CD8-positive, alpha-beta T cell (primary cell): ENCODE measurements at regions of chr2 and their contacts with region 1.

Region 1: GRCh38 chr2:73985308-73986084 is 786 bp downstream of the TET3 start:
- DNase-seq: peak in 7 of 9 experiments; percentile 45 to 83 (median 61)
- ATAC-seq: peak; percentile 33
- H3K4me3 ChIP-seq: peak overlapping the region; percentile 65 to 72
- H3K4me3 Mint-ChIP-seq: peak overlapping the region; percentile 80
- H3K27ac ChIP-seq: peak overlapping the region; percentile 37 to 71
- H3K27ac Mint-ChIP-seq: peak overlapping the region; percentile 85
- H3K4me1 ChIP-seq: peaks cover 78% of the 10 kb centered on the region
- H3K4me1 Mint-ChIP-seq: peaks cover 79% of the 10 kb centered on the region
- H3K27me3 ChIP-seq: no peaks in the 10 kb centered on the region
- H3K27me3 Mint-ChIP-seq: no peaks in the 10 kb centered on the region
- CTCF ChIP-seq: no peak

Region 2: DNA sequence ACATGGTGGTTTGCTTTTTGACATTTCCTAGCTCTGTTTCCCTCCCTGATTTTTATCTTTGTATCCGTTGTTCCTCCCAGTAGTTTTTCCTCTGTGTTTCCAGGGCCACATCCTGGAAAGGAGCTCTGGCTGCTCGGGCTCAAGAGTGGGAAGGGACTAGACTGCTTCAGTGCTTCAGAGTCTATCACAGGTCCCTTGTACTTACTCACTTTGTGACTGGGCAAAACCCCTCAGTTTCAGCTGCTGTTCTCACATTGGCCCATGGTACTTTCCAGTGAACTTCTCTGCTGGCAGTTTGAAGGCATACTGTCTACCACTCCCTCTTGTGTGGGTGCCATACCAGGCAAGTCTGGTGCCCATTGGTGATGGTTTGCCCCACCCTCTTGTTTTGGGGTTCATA is 164.3 kb before region 1 on chr2:
- CTCF ChIA-PET with region 1: interaction called, 10 read pairs
- POLR2A ChIA-PET with region 1: interaction called, 4 read pairs
- intact Hi-C with region 1: loop called (anchors 2 kb)
- DNase-seq: no peak
- ATAC-seq: no peak
- H3K4me3 ChIP-seq: no peak overlapping the region
- H3K4me3 Mint-ChIP-seq: no peak overlapping the region
- H3K27ac ChIP-seq: no peak overlapping the region
- H3K27ac Mint-ChIP-seq: no peak overlapping the region
- H3K4me1 ChIP-seq: no peaks in the 10 kb centered on the region
- H3K4me1 Mint-ChIP-seq: peaks cover 7% of the 10 kb centered on the region
- H3K27me3 ChIP-seq: peaks cover 0 to 3% of the 10 kb centered on the region in 2 experiments
- H3K27me3 Mint-ChIP-seq: peaks cover 5% of the 10 kb centered on the region
- CTCF ChIP-seq: no peak

Region 3: GRCh38 chr2:73926493-73927338 is 58.8 kb before region 1 on chr2 and contains the start of gene DGUOK:
- CTCF ChIA-PET with region 1: interaction called, 3 read pairs
- POLR2A ChIA-PET with region 1: interaction called, 10 read pairs
- intact Hi-C with region 1: loop called (anchors 1 kb)
- DNase-seq: peak; percentile 90 to 100 (median 96)
- ATAC-seq: peak; percentile 96
- H3K4me3 ChIP-seq: peak within 1 kb of the TSS; percentile 70 to 72
- H3K4me3 Mint-ChIP-seq: peak within 1 kb of the TSS; percentile 88
- H3K27ac ChIP-seq: peak within 1 kb of the TSS; percentile 94
- H3K27ac Mint-ChIP-seq: peak within 1 kb of the TSS; percentile 99
- H3K4me1 ChIP-seq: peaks cover 45% of the 10 kb centered on the region
- H3K4me1 Mint-ChIP-seq: peaks cover 52% of the 10 kb centered on the region
- H3K27me3 ChIP-seq: no peaks in the 10 kb centered on the region
- H3K27me3 Mint-ChIP-seq: no peaks in the 10 kb centered on the region
- CTCF ChIP-seq: no peak
- total RNA-seq, gene DGUOK: 29.0 to 31.8 TPM

Region 4: GRCh38 chr2:73939419-73939818 is 46.1 kb before region 1 on chr2:
- CTCF ChIA-PET with region 1: interaction called, 10 read pairs
- POLR2A ChIA-PET with region 1: interaction called, 3 read pairs
- intact Hi-C with region 1: loop called in 1 of 2 experiments (anchors 1 kb)
- DNase-seq: peak in 4 of 9 experiments; percentile 34 to 64 (median 44)
- ATAC-seq: peak; percentile 80
- H3K4me3 ChIP-seq: no peak overlapping the region
- H3K4me3 Mint-ChIP-seq: no peak overlapping the region
- H3K27ac ChIP-seq: no peak overlapping the region
- H3K27ac Mint-ChIP-seq: peak overlapping the region; percentile 56
- H3K4me1 ChIP-seq: peaks cover 33% of the 10 kb centered on the region
- H3K4me1 Mint-ChIP-seq: peaks cover 73% of the 10 kb centered on the region
- H3K27me3 ChIP-seq: no peaks in the 10 kb centered on the region
- H3K27me3 Mint-ChIP-seq: no peaks in the 10 kb centered on the region
- CTCF ChIP-seq: peak; percentile 20

Region 5: GRCh38 chr2:73970850-73971471 is 14.5 kb before region 1 on chr2:
- CTCF ChIA-PET with region 1: interaction called, 16 read pairs
- POLR2A ChIA-PET with region 1: interaction called, 24 read pairs
- intact Hi-C with region 1: loop called in 1 of 2 experiments (anchors 2 kb)
- DNase-seq: peak in 8 of 9 experiments; percentile 39 to 91 (median 66)
- ATAC-seq: peak; percentile 82
- H3K4me3 ChIP-seq: peak overlapping the region; percentile 16 to 20
- H3K4me3 Mint-ChIP-seq: peak overlapping the region; percentile 73
- H3K27ac ChIP-seq: peak overlapping the region; percentile 42 to 83
- H3K27ac Mint-ChIP-seq: peak overlapping the region; percentile 84
- H3K4me1 ChIP-seq: peaks cover 50% of the 10 kb centered on the region
- H3K4me1 Mint-ChIP-seq: peaks cover 73% of the 10 kb centered on the region
- H3K27me3 ChIP-seq: no peaks in the 10 kb centered on the region
- H3K27me3 Mint-ChIP-seq: no peaks in the 10 kb centered on the region
- CTCF ChIP-seq: no peak

Region 6: DNA sequence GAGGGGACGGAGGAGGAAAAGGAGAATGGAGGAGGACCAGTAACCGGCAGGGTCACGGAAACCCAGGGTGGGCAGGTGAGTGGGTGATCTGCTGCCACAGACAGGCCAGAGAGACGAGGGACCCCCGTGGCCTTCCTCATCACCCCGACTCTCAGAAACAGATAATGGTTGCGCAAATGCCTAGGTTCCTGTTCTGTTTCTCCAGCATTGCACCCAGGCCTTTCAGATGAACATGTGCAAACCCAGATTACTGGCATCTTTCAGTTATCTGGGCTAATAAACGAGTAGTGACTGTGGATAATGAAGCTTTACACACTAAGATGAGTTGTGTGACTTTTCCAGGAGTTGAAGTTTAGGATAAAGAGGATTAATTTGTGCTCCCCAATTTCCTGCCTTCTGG is 45.7 kb after region 1 on chr2:
- CTCF ChIA-PET with region 1: interaction called, 6 read pairs
- POLR2A ChIA-PET with region 1: no interaction called
- intact Hi-C with region 1: loop called in 1 of 2 experiments (anchors 5 kb)
- DNase-seq: peak in 1 of 9 experiments; percentile 25
- ATAC-seq: no peak
- H3K4me3 ChIP-seq: no peak overlapping the region
- H3K4me3 Mint-ChIP-seq: peak overlapping the region; percentile 64
- H3K27ac ChIP-seq: peak overlapping the region in 1 of 2 experiments; percentile 78
- H3K27ac Mint-ChIP-seq: peak overlapping the region; percentile 96
- H3K4me1 ChIP-seq: peaks cover 54% of the 10 kb centered on the region
- H3K4me1 Mint-ChIP-seq: peaks cover 80% of the 10 kb centered on the region
- H3K27me3 ChIP-seq: no peaks in the 10 kb centered on the region
- H3K27me3 Mint-ChIP-seq: no peaks in the 10 kb centered on the region
- CTCF ChIP-seq: no peak

Region 7: GRCh38 chr2:74198461-74199274 is 213.2 kb after region 1 on chr2 and contains the start of gene MTHFD2:
- CTCF ChIA-PET with region 1: no interaction called
- POLR2A ChIA-PET with region 1: no interaction called
- intact Hi-C with region 1: loop called in 1 of 2 experiments (anchors 5 kb)
- DNase-seq: peak; percentile 74 to 93 (median 88)
- ATAC-seq: peak; percentile 82
- H3K4me3 ChIP-seq: peak within 1 kb of the TSS; percentile 78 to 86
- H3K4me3 Mint-ChIP-seq: peak within 1 kb of the TSS; percentile 98
- H3K27ac ChIP-seq: peak within 1 kb of the TSS; percentile 87 to 89
- H3K27ac Mint-ChIP-seq: peak within 1 kb of the TSS; percentile 99
- H3K4me1 ChIP-seq: peaks cover 17% of the 10 kb centered on the region
- H3K4me1 Mint-ChIP-seq: peaks cover 25% of the 10 kb centered on the region
- H3K27me3 ChIP-seq: no peaks in the 10 kb centered on the region
- H3K27me3 Mint-ChIP-seq: no peaks in the 10 kb centered on the region
- CTCF ChIP-seq: peak; percentile 77
- total RNA-seq, gene MTHFD2: 25.8 to 26.7 TPM